Activated CD4-positive, alpha-beta T cell treated with anti-CD3 and anti-CD28 coated beads, Interleukin-2, amount 10 ng/mL, durations not matched to agents 24 days and 14 days (primary cell): ENCODE measurements at regions of chr14 and their contacts with region 1.

Region 1: GRCh38 chr14:35285168-35286002 is 6.8 kb upstream of the PSMA6 start:
- DNase-seq: peak; percentile 76
- H3K4me3 Mint-ChIP-seq: peak overlapping the region; percentile 78
- H3K27ac Mint-ChIP-seq: peak overlapping the region; percentile 97
- H3K4me1 Mint-ChIP-seq: peaks cover 52% of the 10 kb centered on the region
- H3K27me3 Mint-ChIP-seq: no peaks in the 10 kb centered on the region

Region 2: GRCh38 chr14:35079742-35080141 is 205.6 kb before region 1 on chr14:
- intact Hi-C with region 1: no loop called
- DNase-seq: no peak
- H3K4me3 Mint-ChIP-seq: no peak overlapping the region
- H3K27ac Mint-ChIP-seq: no peak overlapping the region
- H3K4me1 Mint-ChIP-seq: no peaks in the 10 kb centered on the region
- H3K27me3 Mint-ChIP-seq: no peaks in the 10 kb centered on the region

Region 3: DNA sequence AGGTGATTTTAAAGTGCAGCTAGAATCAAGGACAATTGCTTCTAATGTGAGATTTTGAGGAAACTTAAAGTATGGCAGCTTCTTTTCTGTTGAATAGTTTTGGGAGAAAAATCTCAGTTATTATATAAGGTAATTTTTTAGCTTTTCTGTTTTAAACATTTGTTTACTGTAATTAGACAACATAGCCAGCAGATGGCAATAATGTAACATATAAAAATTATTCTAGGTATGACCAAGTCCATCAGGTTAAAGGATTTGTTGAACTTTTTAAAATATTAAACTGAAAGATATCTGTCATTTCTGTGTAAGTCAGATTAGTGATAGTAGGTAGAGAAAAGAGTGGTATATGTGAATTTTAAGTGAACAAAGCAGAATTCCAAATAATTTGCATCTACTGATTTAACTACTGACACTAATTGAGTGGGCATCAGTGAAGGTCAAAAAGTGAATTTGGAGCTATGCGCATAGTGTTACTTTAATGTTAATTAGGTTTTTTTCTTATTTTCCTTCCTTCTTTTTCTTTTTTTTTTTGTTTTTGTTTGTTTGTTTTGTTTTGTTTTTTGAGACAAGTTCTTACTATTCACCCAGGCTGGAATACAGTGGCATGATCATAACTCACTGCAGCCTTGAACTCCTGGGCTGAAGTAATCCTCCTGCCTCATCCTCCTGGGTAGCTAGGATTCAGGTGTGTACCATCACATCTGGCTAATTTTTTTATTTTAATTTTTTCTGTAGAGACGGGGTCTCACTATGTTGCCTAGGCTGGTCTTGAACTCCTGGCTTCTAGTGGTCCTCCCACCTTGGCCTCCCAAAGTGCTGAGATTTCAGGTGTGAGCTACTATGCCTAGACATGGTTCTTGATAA is 144.4 kb before region 1 on chr14:
- intact Hi-C with region 1: loop called (anchors 5 kb)
- DNase-seq: no peak
- H3K4me3 Mint-ChIP-seq: no peak overlapping the region
- H3K27ac Mint-ChIP-seq: no peak overlapping the region
- H3K4me1 Mint-ChIP-seq: peaks cover 19% of the 10 kb centered on the region
- H3K27me3 Mint-ChIP-seq: no peaks in the 10 kb centered on the region

Region 4: GRCh38 chr14:35201066-35201465 is 84.3 kb before region 1 on chr14:
- intact Hi-C with region 1: loop called (anchors 1 kb)
- DNase-seq: no peak
- H3K4me3 Mint-ChIP-seq: peak overlapping the region; percentile 56
- H3K27ac Mint-ChIP-seq: peak overlapping the region; percentile 77
- H3K4me1 Mint-ChIP-seq: peaks cover 32% of the 10 kb centered on the region
- H3K27me3 Mint-ChIP-seq: no peaks in the 10 kb centered on the region

Region 5: DNA sequence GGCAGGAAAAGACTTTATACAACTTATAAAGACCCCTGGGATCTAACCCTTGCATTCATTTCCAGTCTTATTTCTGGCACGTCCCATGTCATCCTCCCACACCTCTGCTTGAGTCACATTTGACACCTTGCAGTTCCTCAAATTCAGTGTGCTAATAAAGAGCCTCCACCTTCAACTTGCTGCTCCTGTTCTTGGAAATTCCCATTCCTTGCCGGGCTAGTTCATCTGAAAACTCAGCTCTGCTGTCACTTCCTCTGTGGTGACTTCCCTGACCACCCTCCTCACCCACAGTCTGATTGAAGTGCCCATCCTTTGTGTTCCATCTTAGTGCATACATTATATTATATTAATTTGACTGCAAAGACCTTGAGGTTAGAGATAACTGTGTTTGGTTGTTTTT is 30.6 kb before region 1 on chr14:
- intact Hi-C with region 1: loop called (anchors 1 kb)
- DNase-seq: peak; percentile 66
- H3K4me3 Mint-ChIP-seq: peak overlapping the region; percentile 41
- H3K27ac Mint-ChIP-seq: peak overlapping the region; percentile 80
- H3K4me1 Mint-ChIP-seq: peaks cover 38% of the 10 kb centered on the region
- H3K27me3 Mint-ChIP-seq: no peaks in the 10 kb centered on the region

Region 6: DNA sequence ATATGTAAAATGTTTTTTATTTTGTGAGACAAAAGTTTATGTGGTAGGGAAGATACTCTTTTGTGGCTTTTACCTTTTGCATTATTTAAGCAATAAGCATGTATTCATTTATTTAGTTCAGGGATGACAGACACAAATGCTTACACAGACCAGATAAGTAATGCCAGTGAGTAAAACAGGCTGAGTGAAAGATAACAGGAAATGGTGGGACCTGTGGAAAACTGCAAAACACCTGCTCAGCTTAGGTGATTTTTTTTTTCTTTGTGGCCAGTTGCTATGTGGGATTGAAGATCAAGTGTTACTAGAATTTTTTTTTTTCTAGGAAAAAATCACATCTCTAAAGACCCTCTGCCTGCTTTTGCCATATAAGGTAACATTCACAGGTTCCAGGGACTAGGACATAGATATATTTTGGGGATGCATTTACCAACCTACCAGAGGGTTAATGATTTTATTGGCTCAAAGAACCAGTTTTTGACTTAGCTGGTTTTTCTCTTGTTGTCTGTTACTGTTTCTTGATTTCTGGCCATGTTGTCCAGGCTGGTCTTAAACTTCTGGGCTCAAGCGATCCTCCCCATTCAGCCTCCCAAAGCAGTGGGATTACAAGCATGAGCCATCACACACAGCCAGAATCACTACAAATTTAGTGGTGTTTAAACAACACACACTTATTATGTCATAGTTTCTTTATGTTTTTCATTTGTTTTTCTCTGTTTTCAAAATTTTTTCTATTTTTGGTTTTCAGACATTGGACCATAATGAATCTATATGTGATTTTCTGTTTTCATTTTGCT is 16.5 kb after region 1 on chr14:
- intact Hi-C with region 1: loop called (anchors 1 kb)
- DNase-seq: no peak
- H3K4me3 Mint-ChIP-seq: peak overlapping the region; percentile 73
- H3K27ac Mint-ChIP-seq: peak overlapping the region; percentile 90
- H3K4me1 Mint-ChIP-seq: peaks cover 48% of the 10 kb centered on the region
- H3K27me3 Mint-ChIP-seq: no peaks in the 10 kb centered on the region

Region 7: DNA sequence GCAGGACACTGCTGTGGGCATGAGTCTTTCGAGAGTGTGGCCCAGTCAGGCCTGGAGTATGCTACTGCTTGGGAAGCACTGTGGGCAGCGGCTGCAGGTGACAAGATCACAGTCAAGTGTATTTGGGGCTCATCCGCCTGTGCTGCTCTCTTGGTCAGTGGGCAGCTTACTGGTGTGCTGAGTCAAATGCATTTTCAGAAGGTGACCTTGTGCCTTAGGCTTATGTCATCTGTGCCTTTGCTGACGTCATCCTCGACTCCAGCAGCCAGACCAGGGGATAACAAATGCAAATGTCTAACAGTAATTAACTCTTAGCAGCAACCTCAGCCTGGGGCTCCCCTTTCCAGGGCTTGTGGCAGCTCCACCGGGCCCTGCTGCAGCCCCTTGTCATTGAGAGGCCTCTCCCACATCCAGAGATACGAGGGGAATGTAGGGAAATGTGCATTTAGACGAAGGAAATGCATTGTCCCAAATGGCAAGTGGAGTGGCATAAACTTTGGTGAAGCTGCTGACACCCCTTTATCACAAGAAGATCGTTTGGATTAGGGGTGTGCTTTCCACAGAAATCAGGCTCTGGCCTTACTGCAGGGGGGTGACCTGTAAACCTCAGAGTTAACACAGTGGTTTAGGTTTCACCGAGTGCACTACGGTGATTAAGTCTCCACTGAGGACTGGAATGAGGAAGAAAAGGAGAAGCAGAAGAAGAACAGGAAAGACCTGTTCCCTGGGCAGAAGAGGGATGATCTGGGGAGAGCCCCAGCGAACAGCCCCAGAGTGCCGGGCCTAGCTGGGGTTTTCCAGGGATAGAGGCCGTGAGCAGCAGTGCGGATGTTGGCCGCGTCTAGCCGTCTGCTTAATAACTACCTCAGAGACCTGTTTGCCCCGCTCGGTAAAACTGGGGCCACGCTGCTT is 46.5 kb after region 1 on chr14:
- intact Hi-C with region 1: loop called (anchors 2 kb)
- DNase-seq: no peak
- H3K4me3 Mint-ChIP-seq: peak overlapping the region; percentile 79
- H3K27ac Mint-ChIP-seq: peak overlapping the region; percentile 91
- H3K4me1 Mint-ChIP-seq: peaks cover 30% of the 10 kb centered on the region
- H3K27me3 Mint-ChIP-seq: no peaks in the 10 kb centered on the region

Region 8: GRCh38 chr14:35355981-35356841 is 70.8 kb after region 1 on chr14:
- intact Hi-C with region 1: loop called (anchors 1 kb)
- DNase-seq: peak; percentile 64
- H3K4me3 Mint-ChIP-seq: peak overlapping the region; percentile 9
- H3K27ac Mint-ChIP-seq: peak overlapping the region; percentile 87
- H3K4me1 Mint-ChIP-seq: peaks cover 26% of the 10 kb centered on the region
- H3K27me3 Mint-ChIP-seq: no peaks in the 10 kb centered on the region